ENCODE measurements at regions of chr21 and their contacts with region 1.

Region 1: GRCh38 chr21:24705201-24705600 is 902.1 kb downstream of the MRPL39 start:
- DNase-seq: no peak
- ATAC-seq: no peak
- H3K4me3 ChIP-seq: no peak overlapping the region
- H3K27ac ChIP-seq: no peak overlapping the region
- H3K4me1 ChIP-seq: no peaks in the 10 kb centered on the region
- H3K27me3 ChIP-seq: no peaks in the 10 kb centered on the region
- CTCF ChIP-seq: no peak

Region 2: GRCh38 chr21:24716281-24716918 is 11.2 kb after region 1 on chr21:
- CTCF ChIA-PET with region 1: no interaction called
- POLR2A ChIA-PET with region 1: no interaction called
- intact Hi-C with region 1: no loop called
- DNase-seq: no peak
- ATAC-seq: no peak
- H3K4me3 ChIP-seq: no peak overlapping the region
- H3K27ac ChIP-seq: no peak overlapping the region
- H3K4me1 ChIP-seq: no peaks in the 10 kb centered on the region
- H3K27me3 ChIP-seq: no peaks in the 10 kb centered on the region
- CTCF ChIP-seq: no peak

Region 3: DNA sequence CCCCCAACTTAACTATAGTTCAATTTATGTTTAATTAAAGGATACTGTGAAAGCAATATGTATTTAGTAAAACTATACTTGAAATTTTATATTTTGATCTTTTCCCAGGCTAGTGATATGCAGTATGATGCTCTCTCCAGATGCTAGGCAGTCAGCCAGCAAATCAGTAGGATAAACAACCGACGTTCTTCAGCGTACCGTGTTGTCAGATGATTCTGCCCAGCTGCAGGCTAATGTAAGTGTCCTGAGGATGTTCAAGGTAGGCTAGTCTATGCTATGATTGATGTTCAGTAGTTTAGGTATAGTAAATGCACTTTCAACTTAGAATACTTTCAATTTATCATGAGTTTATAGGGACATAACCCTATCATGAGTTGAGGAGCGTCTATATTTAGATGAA is 139.5 kb after region 1 on chr21:
- CTCF ChIA-PET with region 1: no interaction called
- POLR2A ChIA-PET with region 1: no interaction called
- intact Hi-C with region 1: loop called (anchors 10 kb)
- DNase-seq: no peak
- ATAC-seq: no peak
- H3K4me3 ChIP-seq: no peak overlapping the region
- H3K27ac ChIP-seq: no peak overlapping the region
- H3K4me1 ChIP-seq: no peaks in the 10 kb centered on the region
- H3K27me3 ChIP-seq: no peaks in the 10 kb centered on the region
- CTCF ChIP-seq: no peak